ENCODE measurements at regions of chr9 and their contacts with region 1.

Region 1: DNA sequence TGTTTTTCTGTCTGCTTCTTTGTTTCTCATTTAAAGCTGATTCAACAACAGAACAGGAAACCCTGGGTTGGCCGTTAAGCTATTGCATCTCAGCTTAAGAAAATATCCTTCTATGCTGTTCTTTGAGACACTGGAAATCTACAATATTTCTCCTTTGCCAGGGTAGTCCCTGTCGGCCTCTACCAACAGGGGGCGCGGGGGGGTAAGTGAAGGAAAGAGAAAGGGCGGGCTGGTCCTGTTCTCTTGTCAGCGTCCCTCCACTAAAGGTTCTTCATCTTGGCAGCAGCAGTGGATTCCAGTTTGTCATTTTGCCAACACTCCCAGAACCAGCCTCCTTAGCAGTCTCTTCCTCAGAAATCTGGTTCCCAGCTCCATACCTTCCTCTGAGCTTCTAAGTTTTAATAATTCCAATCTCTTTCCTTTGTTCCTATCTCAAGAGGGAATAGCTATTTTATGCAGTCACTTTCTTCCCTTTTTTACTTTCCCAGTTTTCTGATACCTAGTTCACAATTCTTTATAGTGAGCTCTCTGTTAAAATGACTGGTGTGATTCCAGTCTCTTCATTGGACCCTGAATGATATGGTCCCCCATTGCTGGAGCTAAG is 222.3 kb downstream of the GLIS3 start:
- DNase-seq: peak; percentile 86
- H3K4me3 Mint-ChIP-seq: no peak overlapping the region
- H3K27ac Mint-ChIP-seq: no peak overlapping the region
- H3K4me1 Mint-ChIP-seq: peaks cover 7% of the 10 kb centered on the region
- H3K27me3 Mint-ChIP-seq: no peaks in the 10 kb centered on the region
- CTCF ChIP-seq: peak; percentile 79

Region 2: DNA sequence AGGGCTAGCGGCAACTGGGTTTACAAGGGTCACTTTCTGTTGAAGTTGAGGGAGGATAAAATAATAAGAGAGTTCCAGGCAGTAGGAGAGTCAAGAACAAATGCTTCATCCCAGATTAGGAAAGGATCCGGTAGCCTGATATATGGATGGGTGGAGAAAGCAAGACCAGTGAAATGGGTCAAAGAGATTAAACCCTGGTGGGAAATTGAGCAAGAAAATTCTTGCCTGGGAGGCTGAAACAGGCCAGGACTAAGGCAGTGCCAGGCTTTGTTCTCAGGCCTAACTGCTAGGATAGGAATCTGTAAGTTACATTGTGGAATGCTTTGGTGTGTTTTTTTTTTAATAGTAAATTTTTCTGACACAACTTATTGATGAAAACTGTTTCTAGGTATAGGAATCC is 294.4 kb before region 1 on chr9:
- CTCF ChIA-PET with region 1: no interaction called
- POLR2A ChIA-PET with region 1: no interaction called
- intact Hi-C with region 1: no loop called
- DNase-seq: no peak
- H3K4me3 Mint-ChIP-seq: no peak overlapping the region
- H3K27ac Mint-ChIP-seq: no peak overlapping the region
- H3K4me1 Mint-ChIP-seq: no peaks in the 10 kb centered on the region
- H3K27me3 Mint-ChIP-seq: no peaks in the 10 kb centered on the region
- CTCF ChIP-seq: no peak

Region 3: GRCh38 chr9:4038182-4038723 is 39.3 kb before region 1 on chr9:
- CTCF ChIA-PET with region 1: no interaction called
- POLR2A ChIA-PET with region 1: no interaction called
- intact Hi-C with region 1: no loop called
- DNase-seq: no peak
- H3K4me3 Mint-ChIP-seq: no peak overlapping the region
- H3K27ac Mint-ChIP-seq: no peak overlapping the region
- H3K4me1 Mint-ChIP-seq: no peaks in the 10 kb centered on the region
- H3K27me3 Mint-ChIP-seq: no peaks in the 10 kb centered on the region
- CTCF ChIP-seq: no peak

Region 4: GRCh38 chr9:4065054-4065453 is 12.5 kb before region 1 on chr9:
- CTCF ChIA-PET with region 1: interaction called, 10 read pairs
- POLR2A ChIA-PET with region 1: interaction called, 3 read pairs
- intact Hi-C with region 1: no loop called
- DNase-seq: no peak
- H3K4me3 Mint-ChIP-seq: no peak overlapping the region
- H3K27ac Mint-ChIP-seq: no peak overlapping the region
- H3K4me1 Mint-ChIP-seq: peaks cover 12% of the 10 kb centered on the region
- H3K27me3 Mint-ChIP-seq: no peaks in the 10 kb centered on the region
- CTCF ChIP-seq: no peak

Region 5: DNA sequence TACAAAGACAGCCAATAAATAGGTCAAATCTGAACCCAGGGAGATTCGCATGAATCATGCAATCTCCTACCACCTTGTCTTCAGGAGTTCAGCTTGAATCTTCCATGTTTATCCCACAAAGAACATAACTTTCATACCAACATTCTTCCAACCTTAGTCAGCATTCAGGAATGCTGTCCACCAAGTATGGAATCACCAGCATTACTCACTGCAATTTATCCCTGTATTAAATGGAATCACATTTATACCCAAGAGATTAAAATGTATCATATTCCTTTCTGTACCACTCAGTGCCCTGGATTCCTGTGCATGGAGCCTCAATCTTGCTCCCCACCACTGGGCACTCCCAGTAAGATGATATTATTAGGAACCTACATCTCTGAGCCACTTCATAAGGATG is 59.6 kb after region 1 on chr9:
- CTCF ChIA-PET with region 1: no interaction called
- POLR2A ChIA-PET with region 1: no interaction called
- intact Hi-C with region 1: loop called (anchors 5 kb)
- DNase-seq: peak; percentile 85
- H3K4me3 Mint-ChIP-seq: no peak overlapping the region
- H3K27ac Mint-ChIP-seq: peak overlapping the region; percentile 76
- H3K4me1 Mint-ChIP-seq: peaks cover 24% of the 10 kb centered on the region
- H3K27me3 Mint-ChIP-seq: no peaks in the 10 kb centered on the region
- CTCF ChIP-seq: no peak

Region 6: GRCh38 chr9:4228606-4229005 is 151.0 kb after region 1 on chr9:
- CTCF ChIA-PET with region 1: interaction called, 18 read pairs
- POLR2A ChIA-PET with region 1: no interaction called
- intact Hi-C with region 1: loop called (anchors 1 kb)
- DNase-seq: peak; percentile 48
- H3K4me3 Mint-ChIP-seq: no peak overlapping the region
- H3K27ac Mint-ChIP-seq: peak overlapping the region; percentile 76
- H3K4me1 Mint-ChIP-seq: no peaks in the 10 kb centered on the region
- H3K27me3 Mint-ChIP-seq: no peaks in the 10 kb centered on the region
- CTCF ChIP-seq: peak; percentile 62

Region 7: GRCh38 chr9:4366591-4367330 is 289.2 kb after region 1 on chr9:
- CTCF ChIA-PET with region 1: no interaction called
- POLR2A ChIA-PET with region 1: no interaction called
- intact Hi-C with region 1: loop called (anchors 1 kb)
- DNase-seq: peak; percentile 52
- H3K4me3 Mint-ChIP-seq: no peak overlapping the region
- H3K27ac Mint-ChIP-seq: no peak overlapping the region
- H3K4me1 Mint-ChIP-seq: no peaks in the 10 kb centered on the region
- H3K27me3 Mint-ChIP-seq: peaks cover 3% of the 10 kb centered on the region
- CTCF ChIP-seq: peak; percentile 80